B cell (primary cell): ENCODE measurements at regions of chr1 and their contacts with region 1.

Region 1: DNA sequence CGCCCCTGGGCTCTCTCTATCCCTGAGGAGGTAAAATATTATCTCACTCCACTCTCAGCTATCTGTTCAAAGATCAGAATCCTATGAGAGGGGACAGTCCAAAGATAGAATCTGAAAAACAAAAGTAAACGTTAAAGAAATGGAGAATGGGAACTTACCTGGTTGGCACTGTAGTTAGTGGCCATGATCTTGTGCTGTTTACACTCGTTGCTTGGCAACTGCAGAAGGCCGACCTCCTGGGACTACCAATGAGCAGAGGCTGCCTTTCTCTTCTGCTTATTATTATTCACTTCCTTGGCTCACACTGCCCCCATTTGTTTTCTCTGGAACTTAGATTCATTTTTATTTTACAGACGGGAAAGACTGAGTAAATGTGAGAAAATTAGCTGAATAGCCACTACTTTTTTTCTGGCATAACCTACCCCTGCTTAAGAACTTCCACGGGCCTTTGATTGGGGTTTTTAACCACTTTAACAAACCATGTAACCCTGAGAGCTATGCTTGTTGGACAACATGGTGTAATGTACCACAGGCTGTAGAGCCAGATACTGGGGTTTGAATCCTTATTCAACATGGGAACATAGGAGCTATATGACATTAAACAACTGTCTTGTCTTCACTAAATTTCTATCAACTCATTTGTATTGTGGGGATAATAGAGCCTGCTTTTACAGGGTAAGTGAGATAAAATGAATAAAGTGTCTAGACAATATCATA is at the start of gene CFAP126:
- DNase-seq: peak; percentile 91
- ATAC-seq: peak; percentile 100
- H3K4me3 ChIP-seq: no peak within 1 kb of the TSS
- H3K4me3 Mint-ChIP-seq: no peak within 1 kb of the TSS
- H3K27ac ChIP-seq: peak within 1 kb of the TSS; percentile 69 to 91
- H3K27ac Mint-ChIP-seq: peak within 1 kb of the TSS; percentile 32
- H3K4me1 ChIP-seq: peaks cover 7 to 9% of the 10 kb centered on the region in 2 donors
- H3K4me1 Mint-ChIP-seq: peaks cover 8% of the 10 kb centered on the region
- H3K27me3 ChIP-seq: no peaks in the 10 kb centered on the region
- H3K27me3 Mint-ChIP-seq: no peaks in the 10 kb centered on the region
- CTCF ChIP-seq: peak; percentile 48
- total RNA-seq, gene CFAP126: not detected in 2 replicates

Region 2: GRCh38 chr1:161305867-161306519 is 61.8 kb before region 1 on chr1:
- CTCF ChIA-PET with region 1: no interaction called
- POLR2A ChIA-PET with region 1: no interaction called
- intact Hi-C with region 1: loop called (anchors 2 kb)
- DNase-seq: peak; percentile 93
- ATAC-seq: peak; percentile 89
- H3K4me3 ChIP-seq: peak overlapping the region; percentile 66 to 91 (median 80)
- H3K4me3 Mint-ChIP-seq: peak overlapping the region; percentile 97
- H3K27ac ChIP-seq: peak overlapping the region; percentile 59 to 72
- H3K27ac Mint-ChIP-seq: peak overlapping the region; percentile 93
- H3K4me1 ChIP-seq: peaks cover 26% of the 10 kb centered on the region in 2 donors
- H3K4me1 Mint-ChIP-seq: peaks cover 42% of the 10 kb centered on the region
- H3K27me3 ChIP-seq: no peaks in the 10 kb centered on the region
- H3K27me3 Mint-ChIP-seq: no peaks in the 10 kb centered on the region
- CTCF ChIP-seq: peak; percentile 49

Region 3: DNA sequence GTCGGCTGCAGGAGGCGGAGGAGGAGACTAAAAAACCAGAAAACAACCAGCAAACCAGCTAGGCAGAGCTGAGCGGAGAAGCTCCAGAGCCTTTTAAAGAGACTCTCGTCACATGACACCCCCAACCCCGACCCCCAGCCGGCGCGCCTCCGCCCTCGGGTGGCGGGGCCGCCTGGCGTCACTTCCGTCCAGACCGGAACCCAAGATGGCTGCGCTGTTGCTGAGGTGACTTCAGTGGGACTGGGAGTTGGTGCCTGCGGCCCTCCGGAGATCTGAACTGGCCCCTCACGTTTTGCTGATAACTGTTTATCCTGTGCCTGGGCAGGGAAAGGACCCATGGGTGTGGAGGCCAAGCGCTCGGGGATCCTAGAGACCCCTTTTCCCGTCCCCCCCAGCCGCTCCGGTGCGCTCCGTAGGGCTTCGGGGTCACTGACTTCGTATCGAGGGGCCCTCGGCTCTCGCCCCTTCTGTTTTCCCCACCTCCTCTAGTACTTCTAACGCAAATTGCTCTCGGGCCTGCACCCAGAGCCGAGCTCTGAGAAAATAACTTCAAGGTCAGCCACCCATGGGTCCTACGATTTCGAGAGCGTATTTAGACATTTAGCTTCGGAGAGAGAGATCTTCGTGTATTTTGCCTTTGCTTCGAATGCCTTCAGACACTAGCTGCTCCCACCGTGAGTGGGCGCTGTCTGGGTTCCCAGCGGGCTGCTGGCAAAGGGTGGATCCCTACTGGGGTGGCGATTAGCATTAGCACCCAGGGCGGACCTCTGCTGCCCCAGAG is 53.5 kb before region 1 on chr1 and contains the start of gene SDHC:
- CTCF ChIA-PET with region 1: no interaction called
- POLR2A ChIA-PET with region 1: no interaction called
- intact Hi-C with region 1: loop called (anchors 1 kb)
- DNase-seq: peak; percentile 93
- ATAC-seq: peak; percentile 95
- H3K4me3 ChIP-seq: peak within 1 kb of the TSS; percentile 87 to 97 (median 94)
- H3K4me3 Mint-ChIP-seq: peak within 1 kb of the TSS; percentile 90
- H3K27ac ChIP-seq: peak within 1 kb of the TSS; percentile 88 to 97
- H3K27ac Mint-ChIP-seq: peak within 1 kb of the TSS; percentile 93
- H3K4me1 ChIP-seq: peaks cover 8 to 15% of the 10 kb centered on the region in 2 donors
- H3K4me1 Mint-ChIP-seq: peaks cover 25% of the 10 kb centered on the region
- H3K27me3 ChIP-seq: no peaks in the 10 kb centered on the region
- H3K27me3 Mint-ChIP-seq: no peaks in the 10 kb centered on the region
- CTCF ChIP-seq: peak; percentile 21
- total RNA-seq, gene SDHC: 99.0 and 109 TPM in 2 replicates

Region 4: GRCh38 chr1:161389691-161390558 is 22.1 kb after region 1 on chr1:
- CTCF ChIA-PET with region 1: interaction called, 3 read pairs
- POLR2A ChIA-PET with region 1: no interaction called
- intact Hi-C with region 1: loop called (anchors 1 kb)
- DNase-seq: peak; percentile 93
- ATAC-seq: peak; percentile 92
- H3K4me3 ChIP-seq: peak overlapping the region; percentile 65 to 89 (median 80)
- H3K4me3 Mint-ChIP-seq: peak overlapping the region; percentile 95
- H3K27ac ChIP-seq: peak overlapping the region; percentile 83
- H3K27ac Mint-ChIP-seq: peak overlapping the region; percentile 94
- H3K4me1 ChIP-seq: peaks cover 9 to 14% of the 10 kb centered on the region in 2 donors
- H3K4me1 Mint-ChIP-seq: peaks cover 18% of the 10 kb centered on the region
- H3K27me3 ChIP-seq: no peaks in the 10 kb centered on the region
- H3K27me3 Mint-ChIP-seq: no peaks in the 10 kb centered on the region
- CTCF ChIP-seq: no peak